CD4-positive, alpha-beta memory T cell (primary cell): ENCODE measurements at regions of chr13 and their contacts with region 1.

Region 1: DNA sequence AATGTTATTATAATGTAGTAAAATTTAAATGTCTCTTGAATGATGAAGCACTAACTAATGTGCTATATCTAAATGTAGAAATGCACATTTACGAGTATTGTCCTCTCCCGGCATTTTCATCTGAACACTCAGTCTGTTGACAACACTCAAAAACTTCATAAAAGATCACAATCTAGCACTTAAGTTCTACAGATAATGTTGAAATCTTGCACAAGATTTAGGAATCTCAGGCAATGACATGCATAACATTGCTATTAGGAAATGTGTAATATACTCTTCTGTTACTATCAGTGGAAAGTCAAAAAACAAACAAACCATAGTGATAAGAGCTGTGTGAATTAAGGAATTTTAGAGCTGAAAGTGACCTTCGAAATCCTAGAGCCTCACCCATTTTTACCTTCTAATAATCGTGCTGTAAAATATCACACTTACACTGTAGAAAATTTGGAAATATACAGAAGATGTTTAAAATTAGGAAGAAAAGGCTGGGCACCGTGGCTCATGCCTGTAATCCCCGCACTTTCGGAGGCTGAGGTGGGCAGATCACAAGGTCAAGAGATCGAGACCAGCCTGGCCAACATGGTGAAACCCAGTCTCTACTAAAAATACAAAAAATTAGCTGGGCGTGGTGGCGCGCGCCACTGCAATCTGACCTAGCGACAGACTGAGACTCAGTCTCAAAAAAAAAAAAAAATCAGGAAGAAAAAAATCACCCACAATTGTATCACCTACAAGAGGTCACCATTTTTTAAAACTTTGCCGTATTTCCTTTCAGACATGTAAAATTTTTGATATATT is 37.7 kb upstream of the XPO4 start:
- DNase-seq: no peak
- H3K4me3 ChIP-seq: no peak overlapping the region
- H3K4me3 Mint-ChIP-seq: no peak overlapping the region
- H3K27ac ChIP-seq: no peak overlapping the region
- H3K27ac Mint-ChIP-seq: no peak overlapping the region
- H3K4me1 ChIP-seq: peaks cover 3% of the 10 kb centered on the region
- H3K4me1 Mint-ChIP-seq: peaks cover 0 to 8% (median under 1%) of the 10 kb centered on the region in 4 donors
- H3K27me3 ChIP-seq: no peaks in the 10 kb centered on the region
- H3K27me3 Mint-ChIP-seq: peaks cover 25 to 30% of the 10 kb centered on the region in 2 donors

Region 2: GRCh38 chr13:22801402-22802003 is 1861.2 kb after region 1 on chr13:
- CTCF ChIA-PET with region 1: no interaction called
- POLR2A ChIA-PET with region 1: no interaction called
- intact Hi-C with region 1: loop called (anchors 5 kb)
- DNase-seq: no peak
- H3K4me3 ChIP-seq: no peak overlapping the region
- H3K4me3 Mint-ChIP-seq: no peak overlapping the region
- H3K27ac ChIP-seq: no peak overlapping the region
- H3K27ac Mint-ChIP-seq: no peak overlapping the region
- H3K4me1 ChIP-seq: no peaks in the 10 kb centered on the region
- H3K4me1 Mint-ChIP-seq: peaks cover 0 to 1% (median 0%) of the 10 kb centered on the region in 4 donors
- H3K27me3 ChIP-seq: no peaks in the 10 kb centered on the region
- H3K27me3 Mint-ChIP-seq: peaks cover 4 to 11% of the 10 kb centered on the region in 2 donors